RWPE1 (cell line): ENCODE measurements at regions of chr20 and their contacts with region 1.

Region 1: DNA sequence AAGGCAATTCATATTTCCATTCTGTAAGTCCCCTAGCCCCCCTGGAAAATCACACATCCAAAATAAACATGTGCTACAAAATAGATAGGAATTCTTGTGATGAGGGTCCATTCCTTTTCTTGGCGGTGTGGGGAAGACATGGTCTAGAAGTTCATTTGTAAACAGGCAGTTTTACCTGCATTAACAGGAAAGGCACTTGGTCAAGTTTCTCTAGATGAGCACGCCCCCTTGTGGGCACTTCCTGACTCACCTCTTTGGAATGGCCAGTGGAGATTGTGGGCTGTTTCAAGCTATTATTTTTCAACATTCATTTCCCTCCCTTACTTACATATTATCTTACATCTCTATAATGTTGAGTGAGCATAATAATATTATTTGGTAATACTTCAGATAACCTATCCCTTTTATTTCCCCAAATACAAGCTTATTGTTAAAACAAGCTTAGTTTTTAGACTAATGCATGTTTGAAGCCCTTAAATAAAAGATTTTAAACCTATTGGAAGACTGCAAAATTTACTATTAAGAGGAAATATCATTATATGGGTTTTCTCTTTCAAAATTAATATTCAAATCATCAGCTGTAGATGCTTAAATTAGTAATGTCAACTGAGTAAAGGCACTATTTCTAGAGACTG is 92.1 kb downstream of the TASP1 start:
- DNase-seq: peak; percentile 64
- H3K27ac ChIP-seq: no peak overlapping the region
- CTCF ChIP-seq: peak; percentile 92

Region 2: DNA sequence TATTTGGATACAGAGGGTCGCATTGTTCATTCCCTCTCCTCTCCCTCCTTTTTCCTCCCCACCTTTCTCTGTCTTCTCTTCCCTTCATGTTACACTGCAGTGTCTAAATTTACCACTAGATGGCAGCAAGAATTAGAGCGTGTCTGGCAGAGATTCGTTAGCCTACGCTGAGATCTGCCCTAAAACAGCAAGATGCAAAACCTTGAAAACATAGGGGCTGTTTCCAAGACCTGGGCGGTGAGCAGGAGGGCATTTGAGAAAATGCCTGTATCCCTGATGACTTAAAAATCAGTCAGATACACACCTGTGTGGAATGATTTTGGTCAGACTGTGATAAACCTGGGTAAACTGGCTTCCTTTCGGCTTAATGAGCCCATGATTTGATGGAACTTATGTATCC is 427.0 kb before region 1 on chr20:
- CTCF ChIA-PET with region 1: interaction called, 23 read pairs
- POLR2A ChIA-PET with region 1: no interaction called
- DNase-seq: peak; percentile 46
- H3K27ac ChIP-seq: no peak overlapping the region
- CTCF ChIP-seq: peak; percentile 96

Region 3: GRCh38 chr20:13533946-13534345 is 12.7 kb before region 1 on chr20:
- CTCF ChIA-PET with region 1: interaction called, 10 read pairs
- POLR2A ChIA-PET with region 1: no interaction called
- DNase-seq: no peak
- H3K27ac ChIP-seq: no peak overlapping the region
- CTCF ChIP-seq: no peak

Region 4: GRCh38 chr20:13632431-13632830 is 85.8 kb after region 1 on chr20:
- CTCF ChIA-PET with region 1: no interaction called
- POLR2A ChIA-PET with region 1: no interaction called
- DNase-seq: no peak
- H3K27ac ChIP-seq: no peak overlapping the region
- CTCF ChIP-seq: no peak